ENCODE measurements at regions of chr1 and their contacts with region 1.

Region 1: GRCh38 chr1:226062558-226063223 is at the start of gene H3-3A:
- DNase-seq: peak; percentile 100
- H3K4me3 Mint-ChIP-seq: peak within 1 kb of the TSS; percentile 100
- H3K27ac Mint-ChIP-seq: peak within 1 kb of the TSS; percentile 99
- H3K4me1 Mint-ChIP-seq: peaks cover 35% of the 10 kb centered on the region
- H3K27me3 Mint-ChIP-seq: no peaks in the 10 kb centered on the region
- CTCF ChIP-seq: no peak
- total RNA-seq, gene H3-3A: 635 and 710 TPM in 2 replicates

Region 2: DNA sequence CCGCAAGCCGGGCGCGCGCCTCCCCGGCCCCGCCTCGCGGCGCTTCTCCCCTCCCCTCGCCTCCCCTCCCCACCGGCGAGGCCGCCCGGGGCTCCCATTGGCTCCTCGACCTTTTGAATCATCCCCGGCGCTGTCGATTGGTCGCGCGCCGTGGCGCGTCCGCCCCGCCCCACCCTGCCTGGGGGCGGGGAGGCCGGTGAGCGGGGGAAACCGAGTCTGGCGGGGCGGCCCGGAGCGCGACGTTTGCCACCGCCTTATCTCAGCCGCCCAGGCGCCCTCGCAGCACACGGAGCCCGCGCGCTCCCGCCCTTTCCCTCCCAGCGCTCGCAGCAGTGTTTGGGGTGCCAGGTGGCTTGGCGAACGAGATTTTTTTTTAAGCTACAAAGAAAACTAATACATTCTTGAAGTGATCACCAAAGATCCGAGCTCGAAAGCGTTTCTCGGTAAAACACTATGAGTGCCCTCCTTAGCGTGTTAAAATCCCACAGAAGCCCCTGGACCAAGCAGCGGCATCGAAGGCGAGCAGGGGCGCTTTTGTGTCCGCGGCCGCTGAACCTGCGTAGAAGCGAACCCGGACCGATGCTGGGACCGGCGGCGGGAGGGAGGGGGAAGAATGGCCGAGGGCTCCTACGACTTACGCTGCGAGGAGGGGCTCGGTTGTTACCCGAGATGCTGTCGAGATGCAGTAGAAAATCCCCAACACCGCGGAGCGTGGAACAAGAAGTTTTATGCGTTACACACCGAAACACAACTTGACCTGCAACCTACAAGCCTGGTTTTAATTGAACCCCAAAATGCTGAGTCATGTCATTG is 634.4 kb before region 1 on chr1:
- CTCF ChIA-PET with region 1: no interaction called
- POLR2A ChIA-PET with region 1: interaction called, 21 read pairs
- intact Hi-C with region 1: no loop called
- DNase-seq: peak; percentile 99
- H3K4me3 Mint-ChIP-seq: peak overlapping the region; percentile 75
- H3K27ac Mint-ChIP-seq: peak overlapping the region; percentile 20
- H3K4me1 Mint-ChIP-seq: peaks cover 35% of the 10 kb centered on the region
- H3K27me3 Mint-ChIP-seq: no peaks in the 10 kb centered on the region
- CTCF ChIP-seq: no peak

Region 3: DNA sequence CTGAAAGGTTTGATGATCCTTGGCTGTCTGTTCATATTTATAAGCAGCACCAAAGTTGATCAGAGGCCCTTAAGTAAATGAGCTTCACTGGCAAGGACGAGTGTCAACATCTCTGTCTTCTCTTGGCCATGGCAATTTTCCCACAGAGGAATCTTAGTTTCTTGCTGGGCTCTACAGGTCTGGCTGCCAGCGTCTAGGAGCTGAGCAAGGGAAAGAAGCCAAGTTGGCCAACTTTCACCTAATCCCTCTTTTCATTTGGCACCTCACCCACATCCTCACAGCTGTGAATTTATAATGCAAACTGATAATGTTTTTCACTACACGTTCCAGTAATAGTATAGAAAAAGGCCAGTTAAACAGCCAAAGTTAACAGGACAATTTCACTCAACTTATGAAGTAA is 535.8 kb before region 1 on chr1:
- CTCF ChIA-PET with region 1: no interaction called
- POLR2A ChIA-PET with region 1: no interaction called
- intact Hi-C with region 1: no loop called
- DNase-seq: peak; percentile 56
- H3K4me3 Mint-ChIP-seq: no peak overlapping the region
- H3K27ac Mint-ChIP-seq: no peak overlapping the region
- H3K4me1 Mint-ChIP-seq: peaks cover 5% of the 10 kb centered on the region
- H3K27me3 Mint-ChIP-seq: no peaks in the 10 kb centered on the region
- CTCF ChIP-seq: no peak

Region 4: GRCh38 chr1:225987491-225988316 is 75.0 kb before region 1 on chr1:
- CTCF ChIA-PET with region 1: interaction called, 29 read pairs
- POLR2A ChIA-PET with region 1: interaction called, 153 read pairs
- intact Hi-C with region 1: loop called (anchors 2 kb)
- DNase-seq: peak; percentile 77
- H3K4me3 Mint-ChIP-seq: no peak overlapping the region
- H3K27ac Mint-ChIP-seq: no peak overlapping the region
- H3K4me1 Mint-ChIP-seq: peaks cover 6% of the 10 kb centered on the region
- H3K27me3 Mint-ChIP-seq: no peaks in the 10 kb centered on the region
- CTCF ChIP-seq: peak; percentile 89

Region 5: DNA sequence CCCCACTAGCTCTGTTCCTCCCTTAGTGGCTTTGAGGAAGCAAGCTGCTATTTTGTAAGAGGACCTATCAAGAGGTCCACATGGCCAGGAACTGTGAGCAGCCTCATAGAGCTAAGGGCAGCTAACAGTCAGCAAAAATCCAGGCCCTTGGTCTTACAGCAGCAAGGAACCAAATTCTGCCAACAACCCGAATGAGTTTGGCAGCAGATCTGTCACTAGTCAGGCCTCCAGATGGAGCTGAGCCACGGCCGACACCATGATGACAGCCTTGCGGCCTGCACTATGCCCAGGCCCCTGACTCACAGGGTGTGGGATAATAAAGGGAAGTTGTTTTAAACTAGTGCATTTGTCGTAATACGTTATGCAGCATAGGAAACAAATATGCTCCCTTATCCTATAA is 28.2 kb before region 1 on chr1:
- CTCF ChIA-PET with region 1: interaction called, 3 read pairs
- POLR2A ChIA-PET with region 1: interaction called, 16 read pairs
- intact Hi-C with region 1: no loop called
- DNase-seq: peak; percentile 68
- H3K4me3 Mint-ChIP-seq: no peak overlapping the region
- H3K27ac Mint-ChIP-seq: peak overlapping the region; percentile 5
- H3K4me1 Mint-ChIP-seq: peaks cover 4% of the 10 kb centered on the region
- H3K27me3 Mint-ChIP-seq: no peaks in the 10 kb centered on the region
- CTCF ChIP-seq: no peak

Region 6: GRCh38 chr1:226092965-226093364 is 30.3 kb after region 1 on chr1:
- CTCF ChIA-PET with region 1: interaction called, 41 read pairs
- POLR2A ChIA-PET with region 1: interaction called, 12 read pairs
- intact Hi-C with region 1: loop called (anchors 2 kb)
- DNase-seq: peak; percentile 61
- H3K4me3 Mint-ChIP-seq: no peak overlapping the region
- H3K27ac Mint-ChIP-seq: no peak overlapping the region
- H3K4me1 Mint-ChIP-seq: peaks cover 17% of the 10 kb centered on the region
- H3K27me3 Mint-ChIP-seq: no peaks in the 10 kb centered on the region
- CTCF ChIP-seq: no peak

Region 7: DNA sequence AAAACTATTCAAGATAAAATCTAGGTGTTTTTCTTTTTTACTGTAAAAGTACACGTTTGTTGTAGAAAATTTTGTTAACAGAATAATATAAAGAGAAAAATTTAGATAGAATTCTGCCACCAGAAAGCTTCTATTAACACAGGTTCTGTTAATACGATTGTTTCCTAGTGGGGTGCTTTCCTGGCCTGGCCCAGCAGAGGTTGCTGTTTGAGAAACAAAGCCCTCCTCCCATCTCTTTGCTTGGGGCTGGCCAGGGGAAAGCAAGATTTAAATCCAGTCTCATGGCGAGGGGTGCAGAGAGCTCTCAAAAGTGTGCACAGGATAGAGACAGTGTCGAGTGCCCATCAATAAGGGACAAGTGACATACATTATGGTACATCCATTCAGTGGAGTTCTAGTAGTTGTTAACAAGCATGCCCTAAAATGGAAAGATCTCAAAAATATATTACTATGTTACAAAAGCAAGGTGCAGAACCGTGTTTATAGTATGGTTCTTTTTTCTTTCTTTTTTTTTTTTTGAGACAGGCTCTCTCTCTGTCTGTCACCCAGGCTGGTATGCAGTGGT is 138.4 kb after region 1 on chr1:
- CTCF ChIA-PET with region 1: interaction called, 11 read pairs
- POLR2A ChIA-PET with region 1: interaction called, 5 read pairs
- intact Hi-C with region 1: loop called (anchors 1 kb)
- DNase-seq: peak; percentile 54
- H3K4me3 Mint-ChIP-seq: no peak overlapping the region
- H3K27ac Mint-ChIP-seq: no peak overlapping the region
- H3K4me1 Mint-ChIP-seq: no peaks in the 10 kb centered on the region
- H3K27me3 Mint-ChIP-seq: peaks cover 13% of the 10 kb centered on the region
- CTCF ChIP-seq: peak; percentile 39

Measured in MCF 10A (cell line).